Gastrocnemius medialis (tissue), 4 donors: ENCODE measurements at regions of chr7 and their contacts with region 1.

Region 1: GRCh38 chr7:78779788-78780187 is 673.7 kb downstream of the MAGI2 start:
- DNase-seq: no peak
- ATAC-seq: no peak
- H3K4me3 ChIP-seq: no peak overlapping the region
- H3K27ac ChIP-seq: no peak overlapping the region
- H3K4me1 ChIP-seq: no peaks in the 10 kb centered on the region
- H3K27me3 ChIP-seq: no peaks in the 10 kb centered on the region
- CTCF ChIP-seq: peak in 3 of 5 experiments; percentile 4 to 29 (median 26)
- POLR2A ChIP-seq: no peak

Region 2: DNA sequence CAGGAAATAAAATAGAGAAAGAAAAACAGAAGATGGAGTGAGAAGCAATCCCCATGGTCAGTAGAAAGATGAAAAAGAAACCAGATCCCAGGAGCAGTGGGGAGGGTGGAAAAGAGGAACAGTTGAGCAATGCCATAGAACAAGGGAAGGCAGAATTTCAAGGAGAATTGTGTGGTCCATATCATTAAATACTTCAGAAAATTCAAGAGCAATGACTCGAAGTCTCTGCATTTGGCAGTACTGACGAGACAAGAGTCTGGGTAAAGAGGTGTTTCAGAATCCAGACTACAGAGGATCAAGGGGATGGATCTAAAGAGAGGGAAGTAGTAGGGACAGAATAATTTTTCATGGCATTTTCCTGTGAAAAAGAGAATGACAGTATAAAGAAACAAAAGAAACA is 468.6 kb before region 1 on chr7:
- in situ Hi-C with region 1: no loop called
- intact Hi-C with region 1: no loop called
- DNase-seq: no peak
- ATAC-seq: no peak
- H3K4me3 ChIP-seq: no peak overlapping the region
- H3K27ac ChIP-seq: no peak overlapping the region
- H3K4me1 ChIP-seq: no peaks in the 10 kb centered on the region
- H3K27me3 ChIP-seq: no peaks in the 10 kb centered on the region
- CTCF ChIP-seq: no peak
- POLR2A ChIP-seq: no peak

Region 3: GRCh38 chr7:78510580-78511188 is 269.1 kb before region 1 on chr7:
- in situ Hi-C with region 1: no loop called
- intact Hi-C with region 1: loop called (anchors 2 kb)
- DNase-seq: no peak
- ATAC-seq: no peak
- H3K4me3 ChIP-seq: no peak overlapping the region
- H3K27ac ChIP-seq: no peak overlapping the region
- H3K4me1 ChIP-seq: no peaks in the 10 kb centered on the region
- H3K27me3 ChIP-seq: no peaks in the 10 kb centered on the region
- CTCF ChIP-seq: peak in 4 of 5 experiments; percentile 38 to 54 (median 48)
- POLR2A ChIP-seq: no peak

Region 4: DNA sequence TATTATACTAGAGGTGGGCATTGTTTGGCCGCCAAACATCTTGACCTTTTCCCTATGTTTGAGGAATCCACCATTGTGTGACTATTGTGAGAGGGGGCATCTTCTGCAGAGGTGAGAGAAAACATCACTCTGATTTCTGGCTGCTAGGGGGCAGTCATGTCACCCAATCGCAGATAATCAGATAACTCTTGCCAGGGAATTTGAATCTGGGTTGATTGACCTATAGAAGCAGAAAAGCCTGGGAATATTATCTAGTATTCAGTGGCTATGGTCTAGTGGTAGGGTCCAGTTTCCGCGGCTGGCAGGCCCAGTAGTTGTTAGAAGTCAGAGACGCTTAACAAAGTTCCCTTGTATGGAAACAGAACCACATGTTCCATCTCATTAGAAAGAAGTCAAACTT is 172.7 kb before region 1 on chr7:
- in situ Hi-C with region 1: no loop called
- intact Hi-C with region 1: loop called (anchors 5 kb)
- DNase-seq: no peak
- ATAC-seq: no peak
- H3K4me3 ChIP-seq: no peak overlapping the region
- H3K27ac ChIP-seq: no peak overlapping the region
- H3K4me1 ChIP-seq: no peaks in the 10 kb centered on the region
- H3K27me3 ChIP-seq: no peaks in the 10 kb centered on the region
- CTCF ChIP-seq: peak in 1 of 5 experiments; percentile 18
- POLR2A ChIP-seq: no peak

Region 5: GRCh38 chr7:78863281-78863680 is 83.5 kb after region 1 on chr7:
- in situ Hi-C with region 1: no loop called
- intact Hi-C with region 1: no loop called
- DNase-seq: no peak
- ATAC-seq: no peak
- H3K4me3 ChIP-seq: no peak overlapping the region
- H3K27ac ChIP-seq: no peak overlapping the region
- H3K4me1 ChIP-seq: no peaks in the 10 kb centered on the region
- H3K27me3 ChIP-seq: no peaks in the 10 kb centered on the region
- CTCF ChIP-seq: no peak
- POLR2A ChIP-seq: no peak